A549 (cell line): ENCODE measurements at regions of chr14 and their contacts with region 1.

Region 1: DNA sequence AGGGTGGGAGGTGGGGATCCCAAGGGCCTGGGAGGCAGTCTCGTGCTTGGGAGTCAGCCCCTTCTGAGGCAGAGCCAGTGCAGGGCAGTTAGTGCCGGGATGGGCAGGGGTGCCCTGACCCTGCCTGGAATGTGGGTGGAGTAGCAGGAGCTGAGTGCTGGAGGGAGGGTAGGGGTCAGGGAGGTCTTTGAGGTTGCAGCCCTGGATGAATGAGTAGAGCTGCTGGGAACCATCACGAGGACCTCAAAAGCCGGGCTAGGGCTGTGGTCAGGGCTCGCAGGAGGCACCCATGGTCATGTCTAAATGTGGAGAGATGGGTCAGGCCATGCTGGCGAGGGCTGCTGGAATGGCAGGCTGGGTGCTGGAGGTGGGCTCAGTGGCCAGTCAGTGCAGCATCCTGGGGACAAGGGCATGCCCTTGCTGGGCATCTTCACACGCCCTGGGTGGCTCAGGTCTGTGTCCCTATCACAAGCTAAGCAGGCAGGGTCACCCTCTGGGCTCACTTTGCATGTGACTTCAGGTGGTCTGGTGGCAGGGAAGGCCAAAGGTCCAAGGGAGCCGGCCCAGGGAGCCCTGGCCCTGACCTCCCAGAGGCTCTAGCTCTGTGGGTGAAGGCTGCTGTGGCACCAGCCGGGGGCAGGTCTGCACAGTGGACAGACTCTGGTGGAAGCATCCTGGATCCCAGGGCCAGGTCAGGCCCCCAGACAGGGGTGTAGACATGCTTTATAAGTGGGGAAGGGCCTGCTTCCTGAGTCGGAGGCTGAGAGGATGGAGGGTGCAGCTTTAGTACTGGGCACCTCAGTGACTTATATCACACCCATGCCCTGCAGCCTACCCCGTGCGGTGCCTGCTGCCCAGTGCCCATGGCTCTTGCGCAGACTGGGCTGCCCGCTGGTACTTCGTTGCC is 24.5 kb downstream of the PAPLN start:
- DNase-seq: no peak
- ATAC-seq: peak in 1 of 2 experiments; percentile 12; a peak in 3 of 6 replicates
- H3K4me3 ChIP-seq: no peak overlapping the region
- H3K27ac ChIP-seq: no peak overlapping the region
- H3K4me1 ChIP-seq: no peaks in the 10 kb centered on the region
- CTCF ChIP-seq: no peak
- EP300 ChIP-seq: no peak
- POLR2A ChIP-seq: no peak
- RAD21 ChIP-seq: no peak

Region 2: GRCh38 chr14:73276836-73277235 is 15.1 kb after region 1 on chr14:
- CTCF ChIA-PET with region 1: interaction called, 13 read pairs
- POLR2A ChIA-PET with region 1: interaction called, 3 read pairs
- DNase-seq: no peak
- ATAC-seq: peak in 1 of 2 experiments; percentile 32; a peak in 2 of 6 replicates
- H3K4me3 ChIP-seq: no peak overlapping the region
- H3K27ac ChIP-seq: no peak overlapping the region
- H3K4me1 ChIP-seq: no peaks in the 10 kb centered on the region
- CTCF ChIP-seq: no peak
- EP300 ChIP-seq: no peak
- POLR2A ChIP-seq: no peak
- RAD21 ChIP-seq: no peak

Region 3: DNA sequence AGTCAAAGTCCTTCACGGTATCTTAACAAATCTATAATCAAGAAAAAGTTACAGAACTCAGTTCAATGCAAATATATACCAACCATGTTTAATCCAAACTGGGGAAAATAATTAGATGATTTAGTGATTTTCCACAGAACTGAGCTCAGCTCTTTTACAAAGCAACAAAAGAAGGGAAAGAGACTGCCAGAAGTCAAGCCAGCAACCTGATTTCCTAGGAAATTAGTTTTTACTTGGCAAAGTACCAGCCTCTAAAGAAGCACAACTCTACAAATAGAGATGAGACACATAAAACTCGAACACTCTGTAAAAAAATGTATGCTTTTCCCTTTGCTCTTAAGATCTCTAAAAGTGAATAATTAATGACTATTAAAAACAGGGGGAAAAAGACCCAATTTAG is 177.2 kb after region 1 on chr14:
- CTCF ChIA-PET with region 1: no interaction called
- POLR2A ChIA-PET with region 1: no interaction called
- DNase-seq: no peak
- ATAC-seq: no peak
- H3K4me3 ChIP-seq: no peak overlapping the region
- H3K27ac ChIP-seq: no peak overlapping the region
- H3K4me1 ChIP-seq: peaks cover 9% of the 10 kb centered on the region; the same call in 1 of the 3 replicates
- CTCF ChIP-seq: no peak
- EP300 ChIP-seq: no peak
- POLR2A ChIP-seq: no peak
- RAD21 ChIP-seq: no peak